Body of pancreas (tissue), 4 donors: ENCODE measurements at regions of chr21 and their contacts with region 1.

Region 1: DNA sequence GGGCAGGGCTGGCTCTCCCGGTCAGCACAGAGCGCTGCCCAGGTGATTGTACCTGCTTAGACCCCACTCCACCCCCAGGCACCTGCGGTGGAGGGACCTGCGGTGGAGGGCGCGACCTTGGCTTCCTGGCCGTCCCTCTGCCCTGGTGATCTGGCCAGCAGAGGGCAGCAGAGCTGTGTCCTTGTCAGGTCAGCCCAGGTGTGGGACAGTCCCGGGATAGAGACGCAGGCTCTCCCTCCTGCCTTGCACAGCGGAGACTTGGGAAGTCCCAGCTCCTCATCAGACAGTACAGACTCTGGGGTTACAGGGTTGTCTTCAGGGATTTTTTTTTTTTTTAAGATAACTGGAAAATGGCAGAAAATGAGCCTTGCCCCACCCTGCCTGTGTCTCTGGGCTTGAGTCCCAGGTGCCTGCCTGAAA is 10.0 kb downstream of the SLX9 start:
- DNase-seq: peak; percentile 86 to 90 (median 86)
- ATAC-seq: peak; percentile 82
- H3K4me3 ChIP-seq: no peak overlapping the region
- H3K27ac ChIP-seq: no peak overlapping the region
- H3K4me1 ChIP-seq: peaks cover 14% of the 10 kb centered on the region
- H3K27me3 ChIP-seq: no peaks in the 10 kb centered on the region
- CTCF ChIP-seq: peak; percentile 74 to 92 (median 85)
- POLR2A ChIP-seq: no peak

Region 2: GRCh38 chr21:45130324-45130774 is 180.6 kb after region 1 on chr21:
- intact Hi-C with region 1: loop called (anchors 5 kb)
- DNase-seq: peak in 1 of 4 donors; percentile 27
- ATAC-seq: peak; percentile 35
- H3K4me3 ChIP-seq: no peak overlapping the region
- H3K27ac ChIP-seq: peak overlapping the region in 1 of 4 donors; percentile 56
- H3K4me1 ChIP-seq: no peaks in the 10 kb centered on the region
- H3K27me3 ChIP-seq: no peaks in the 10 kb centered on the region
- CTCF ChIP-seq: no peak
- POLR2A ChIP-seq: no peak